A673 (cell line): ENCODE measurements at regions of chr6 and their contacts with region 1.

Region 1: DNA sequence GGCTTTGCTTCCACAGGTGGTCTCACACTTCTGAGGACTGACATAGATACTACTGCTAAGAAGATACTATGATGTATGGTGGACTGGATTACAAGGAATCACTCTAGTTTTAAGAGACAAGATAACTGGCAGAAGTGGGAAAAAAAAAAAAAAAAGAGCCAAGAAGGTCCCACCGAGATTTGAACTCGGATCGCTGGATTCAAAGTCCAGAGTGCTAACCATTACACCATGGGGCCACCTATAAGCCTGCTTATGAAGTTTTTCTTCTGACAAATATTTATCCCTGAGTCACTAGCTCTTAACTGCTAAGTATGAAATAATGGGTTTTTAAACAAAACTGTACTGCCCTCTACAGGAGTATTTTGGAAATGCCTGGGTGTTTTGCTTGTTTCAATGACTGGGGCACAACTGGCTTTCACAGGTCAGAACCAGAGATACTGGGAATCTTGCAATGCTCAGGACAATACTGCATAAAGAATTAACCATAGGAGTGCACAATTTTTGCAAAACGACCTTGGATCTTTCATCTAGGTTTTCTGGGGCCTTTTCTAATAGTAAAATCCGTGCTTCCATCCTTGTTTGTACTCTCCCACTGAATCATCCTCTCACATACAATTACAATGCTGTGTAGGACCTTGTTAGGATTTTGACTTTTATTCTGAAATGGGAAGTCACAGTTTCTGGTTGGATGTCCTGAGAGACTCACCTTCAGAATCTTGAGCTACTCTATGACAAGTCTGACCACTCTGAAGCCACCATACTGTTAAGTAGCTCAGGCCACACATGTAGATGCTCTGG is 116.3 kb downstream of the OR2B2 start:
- DNase-seq: peak; percentile 93
- H3K4me3 ChIP-seq: no peak overlapping the region
- H3K27ac ChIP-seq: no peak overlapping the region
- H3K4me1 ChIP-seq: no peaks in the 10 kb centered on the region
- H3K27me3 ChIP-seq: no peaks in the 10 kb centered on the region
- CTCF ChIP-seq: peak; percentile 76

Region 2: GRCh38 chr6:27601668-27602254 is 194.1 kb before region 1 on chr6:
- CTCF ChIA-PET with region 1: no interaction called
- POLR2A ChIA-PET with region 1: interaction called, 28 read pairs
- intact Hi-C with region 1: no loop called
- DNase-seq: peak; percentile 40
- H3K4me3 ChIP-seq: peak overlapping the region; percentile 50
- H3K27ac ChIP-seq: no peak overlapping the region
- H3K4me1 ChIP-seq: peaks cover 3% of the 10 kb centered on the region
- H3K27me3 ChIP-seq: peaks cover 8% of the 10 kb centered on the region
- CTCF ChIP-seq: no peak

Region 3: GRCh38 chr6:27772261-27773001 is 23.5 kb before region 1 on chr6:
- CTCF ChIA-PET with region 1: interaction called, 10 read pairs
- POLR2A ChIA-PET with region 1: interaction called, 6 read pairs
- intact Hi-C with region 1: no loop called
- DNase-seq: peak; percentile 92
- H3K4me3 ChIP-seq: no peak overlapping the region
- H3K27ac ChIP-seq: no peak overlapping the region
- H3K4me1 ChIP-seq: no peaks in the 10 kb centered on the region
- H3K27me3 ChIP-seq: no peaks in the 10 kb centered on the region
- CTCF ChIP-seq: peak; percentile 97

Region 4: DNA sequence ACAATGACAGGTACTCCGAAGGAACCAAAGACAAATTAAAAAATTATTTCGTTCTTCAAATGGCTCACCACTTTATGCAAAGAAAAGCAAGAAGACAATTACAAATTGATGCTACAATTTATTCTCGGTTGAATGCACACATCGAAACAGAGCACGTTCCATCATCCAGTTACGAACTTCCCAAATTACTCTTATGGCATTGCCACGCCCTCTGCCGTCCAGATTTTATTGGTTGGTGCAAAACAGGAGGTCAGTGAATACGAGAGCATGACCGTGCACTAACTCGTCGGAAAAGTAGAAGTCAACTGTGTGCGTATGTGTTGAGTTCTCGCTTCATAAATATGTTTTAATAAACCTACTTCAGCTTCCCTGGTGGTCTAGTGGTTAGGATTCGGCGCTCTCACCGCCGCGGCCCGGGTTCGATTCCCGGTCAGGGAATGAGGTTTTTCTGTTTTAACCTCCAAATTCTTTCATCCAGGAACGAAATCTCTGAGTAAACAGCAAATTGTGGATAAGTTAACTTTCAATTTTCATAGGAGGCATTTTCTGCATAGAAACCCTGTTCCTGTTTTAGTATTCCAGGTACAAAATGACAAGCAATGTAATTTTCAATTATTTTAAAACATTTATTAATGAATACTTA is 1186.1 kb after region 1 on chr6:
- CTCF ChIA-PET with region 1: no interaction called
- POLR2A ChIA-PET with region 1: no interaction called
- intact Hi-C with region 1: no loop called
- DNase-seq: peak; percentile 90
- H3K4me3 ChIP-seq: peak overlapping the region; percentile 59
- H3K27ac ChIP-seq: peak overlapping the region; percentile 73
- H3K4me1 ChIP-seq: peaks cover 32% of the 10 kb centered on the region
- H3K27me3 ChIP-seq: no peaks in the 10 kb centered on the region
- CTCF ChIP-seq: no peak